HepG2 (cell line): ENCODE measurements at regions of chr15 and their contacts with region 1.

Region 1: DNA sequence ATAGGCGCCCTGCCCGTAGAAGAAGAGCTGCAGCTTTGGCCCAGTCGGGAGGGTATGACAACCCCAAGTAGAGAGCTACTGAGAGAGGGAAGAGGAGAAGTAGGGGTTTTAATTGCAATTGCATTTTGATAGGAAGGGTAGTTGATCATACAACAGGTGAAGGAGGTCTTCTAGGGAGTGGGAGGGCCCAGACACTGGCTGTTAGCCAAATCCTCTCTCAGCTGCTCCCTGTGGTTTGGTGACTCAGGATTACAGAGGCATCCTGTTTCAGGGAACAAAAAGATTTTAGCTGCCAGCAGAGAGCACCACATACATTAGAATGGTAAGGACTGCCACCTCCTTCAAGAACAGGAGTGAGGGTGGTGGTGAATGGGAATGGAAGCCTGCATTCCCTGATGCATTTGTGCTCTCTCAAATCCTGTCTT is 408.9 kb upstream of the THBS1 start:
- DNase-seq: peak; percentile 85
- ATAC-seq: peak; percentile 94
- H3K4me3 ChIP-seq: no peak overlapping the region; a peak in 1 of 6 replicates
- H3K27ac ChIP-seq: no peak overlapping the region
- H3K4me1 ChIP-seq: peaks cover 50% of the 10 kb centered on the region
- H3K27me3 ChIP-seq: no peaks in the 10 kb centered on the region
- CTCF ChIP-seq: peak; percentile 89
- EP300 ChIP-seq: peak in 1 of 2 experiments; percentile 11; a peak in 1 of 4 replicates
- POLR2A ChIP-seq: no peak
- RAD21 ChIP-seq: peak; percentile 84

Region 2: GRCh38 chr15:38817427-38818156 is 354.4 kb before region 1 on chr15:
- CTCF ChIA-PET with region 1: no interaction called
- POLR2A ChIA-PET with region 1: no interaction called
- in situ Hi-C with region 1: no loop called
- intact Hi-C with region 1: loop called (anchors 5 kb)
- DNase-seq: peak; percentile 66
- ATAC-seq: peak; percentile 100
- H3K4me3 ChIP-seq: no peak overlapping the region
- H3K27ac ChIP-seq: no peak overlapping the region
- H3K4me1 ChIP-seq: no peaks in the 10 kb centered on the region
- H3K27me3 ChIP-seq: peaks cover 0 to 5% of the 10 kb centered on the region in 2 experiments; a peak in 2 of 5 replicates
- CTCF ChIP-seq: peak; percentile 98
- EP300 ChIP-seq: no peak
- POLR2A ChIP-seq: no peak
- RAD21 ChIP-seq: peak; percentile 91

Region 3: GRCh38 chr15:39312984-39313383 is 141.0 kb after region 1 on chr15:
- CTCF ChIA-PET with region 1: no interaction called
- POLR2A ChIA-PET with region 1: no interaction called
- in situ Hi-C with region 1: no loop called
- intact Hi-C with region 1: loop called (anchors 2 kb)
- DNase-seq: peak; percentile 77
- ATAC-seq: peak; percentile 95
- H3K4me3 ChIP-seq: no peak overlapping the region
- H3K27ac ChIP-seq: no peak overlapping the region
- H3K4me1 ChIP-seq: peaks cover 14% of the 10 kb centered on the region
- H3K27me3 ChIP-seq: no peaks in the 10 kb centered on the region
- CTCF ChIP-seq: peak; percentile 69
- EP300 ChIP-seq: no peak
- POLR2A ChIP-seq: no peak
- RAD21 ChIP-seq: peak; percentile 52; the same call in 1 of the 2 replicates

Region 4: DNA sequence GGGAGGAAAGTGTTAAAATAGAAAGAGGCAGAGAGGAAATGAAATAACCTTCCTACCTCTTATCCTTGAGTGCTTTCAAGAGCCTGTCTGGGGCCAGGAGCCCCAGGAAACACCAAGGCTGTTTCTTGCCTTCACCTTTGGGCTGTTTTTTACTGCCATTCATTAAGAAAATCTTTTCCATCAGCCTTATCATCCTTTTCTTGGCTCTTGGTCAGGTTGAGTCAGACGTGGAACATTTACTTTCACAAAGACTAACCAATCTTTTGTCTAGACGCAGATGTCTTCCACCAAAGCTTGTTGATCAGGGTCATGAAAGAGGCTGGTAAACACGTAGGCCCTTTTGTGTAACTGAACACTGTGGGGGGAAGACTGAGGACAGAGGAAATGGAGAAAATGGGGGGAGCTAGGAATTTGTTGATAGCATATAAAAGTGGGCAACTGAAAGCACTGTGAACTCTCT is 258.0 kb after region 1 on chr15:
- CTCF ChIA-PET with region 1: no interaction called
- POLR2A ChIA-PET with region 1: no interaction called
- in situ Hi-C with region 1: loop called (anchors 10 kb)
- intact Hi-C with region 1: loop called (anchors 5 kb)
- DNase-seq: peak; percentile 20
- ATAC-seq: no peak
- H3K4me3 ChIP-seq: no peak overlapping the region
- H3K27ac ChIP-seq: no peak overlapping the region
- H3K4me1 ChIP-seq: peaks cover 65% of the 10 kb centered on the region
- H3K27me3 ChIP-seq: no peaks in the 10 kb centered on the region
- CTCF ChIP-seq: no peak
- EP300 ChIP-seq: no peak
- POLR2A ChIP-seq: no peak
- RAD21 ChIP-seq: no peak